H1 (cell line): ENCODE measurements at regions of chr6 and their contacts with region 1.

Region 1: DNA sequence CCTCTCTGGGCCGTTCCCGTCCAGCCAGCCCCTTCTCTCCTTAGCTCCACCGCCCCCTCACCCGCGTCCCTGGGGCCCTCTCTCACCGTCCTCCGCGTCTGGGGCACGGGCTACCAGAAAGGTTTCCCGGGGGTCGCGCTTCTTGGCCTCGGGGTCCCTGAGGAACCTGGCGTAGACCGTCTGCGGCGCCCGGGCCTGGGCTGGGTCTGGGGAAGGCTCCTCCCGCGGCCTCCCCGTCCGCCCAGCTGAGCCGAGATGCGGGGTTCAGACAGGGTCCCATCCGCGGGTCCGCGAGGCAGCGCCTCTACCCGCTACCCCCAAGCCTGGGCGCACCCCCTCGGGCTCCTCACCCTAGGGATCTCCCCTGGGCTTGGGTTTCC is 1.1 kb downstream of the TULP1 start:
- DNase-seq: no peak
- H3K4me3 ChIP-seq: peak overlapping the region; percentile 30 to 67 (median 41)
- H3K27ac ChIP-seq: no peak overlapping the region
- H3K4me1 ChIP-seq: peaks cover 6 to 31% (median 21%) of the 10 kb centered on the region in 4 experiments
- H3K27me3 ChIP-seq: peaks cover 0 to 17% (median 6%) of the 10 kb centered on the region in 4 experiments; a peak in 5 of 7 replicates
- CTCF ChIP-seq: no peak
- EP300 ChIP-seq: no peak
- POLR2A ChIP-seq: no peak
- RAD21 ChIP-seq: no peak

Region 2: DNA sequence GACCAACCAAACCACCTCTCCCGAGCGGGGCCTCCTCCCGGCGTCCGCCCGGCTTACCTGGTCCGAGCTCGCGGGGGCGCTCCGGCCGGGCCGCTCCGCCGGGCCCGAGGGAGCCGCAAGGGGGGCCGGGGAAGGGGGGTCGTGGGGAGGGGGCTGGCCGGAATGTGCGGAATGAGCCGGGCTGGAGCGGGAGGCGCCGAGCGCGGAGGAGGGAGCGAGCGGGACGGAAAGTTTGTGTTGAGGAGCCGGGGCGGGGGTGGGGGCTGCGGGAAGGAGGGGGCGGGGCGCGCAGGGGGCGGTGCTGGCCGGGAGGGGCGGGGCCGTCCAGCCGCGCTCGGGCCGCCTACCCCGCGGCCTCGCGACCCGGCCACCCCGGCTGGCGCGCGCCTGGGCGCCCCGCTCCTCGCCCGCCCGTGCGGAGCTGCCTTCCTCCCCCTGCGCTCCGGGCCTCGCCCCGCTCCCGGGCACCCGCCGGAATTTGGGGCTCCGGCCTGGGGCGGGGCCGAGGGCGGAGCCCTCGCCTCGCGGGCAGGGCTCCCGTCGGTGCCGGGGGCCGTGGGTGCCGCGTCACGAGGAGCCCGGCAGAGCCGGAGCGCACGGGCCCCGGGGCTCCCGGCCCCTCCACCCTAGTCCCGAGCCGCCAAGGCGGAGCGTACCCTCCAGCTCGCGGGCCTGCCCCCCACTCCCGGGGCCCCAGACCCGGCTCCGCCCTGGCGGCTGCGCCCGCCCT is 14.5 kb before region 1 on chr6 and contains the start of gene TEAD3:
- CTCF ChIA-PET with region 1: interaction called, 5 read pairs
- POLR2A ChIA-PET with region 1: interaction called, 1,319 read pairs
- DNase-seq: no peak
- H3K4me3 ChIP-seq: peak within 1 kb of the TSS; percentile 46 to 92 (median 64)
- H3K27ac ChIP-seq: peak within 1 kb of the TSS; percentile 69; the same call in 1 of the 2 replicates
- H3K4me1 ChIP-seq: peaks cover 19 to 44% (median 34%) of the 10 kb centered on the region in 4 experiments
- H3K27me3 ChIP-seq: peaks cover 0 to 13% (median 6%) of the 10 kb centered on the region in 4 experiments; a peak in 4 of 7 replicates
- CTCF ChIP-seq: peak in 1 of 3 experiments; percentile 14; a peak in 1 of 4 replicates
- EP300 ChIP-seq: no peak
- POLR2A ChIP-seq: peak in 1 of 2 experiments; percentile 67; a peak in 2 of 3 replicates
- RAD21 ChIP-seq: peak in 1 of 2 experiments; percentile 7; a peak in 2 of 4 replicates
- total RNA-seq, gene TEAD3: 27.0 and 28.7 TPM in 2 replicates

Region 3: GRCh38 chr6:35757456-35758123 is 246.0 kb after region 1 on chr6:
- CTCF ChIA-PET with region 1: no interaction called
- POLR2A ChIA-PET with region 1: no interaction called
- DNase-seq: no peak
- H3K4me3 ChIP-seq: no peak overlapping the region
- H3K27ac ChIP-seq: no peak overlapping the region
- H3K4me1 ChIP-seq: peaks cover 5 to 18% (median 12%) of the 10 kb centered on the region in 4 experiments
- H3K27me3 ChIP-seq: no peaks in the 10 kb centered on the region
- CTCF ChIP-seq: peak; percentile 64 to 78 (median 71)
- EP300 ChIP-seq: no peak
- POLR2A ChIP-seq: no peak
- RAD21 ChIP-seq: peak; percentile 67 to 83

Region 4: GRCh38 chr6:35850208-35850607 is 338.7 kb after region 1 on chr6:
- CTCF ChIA-PET with region 1: no interaction called
- POLR2A ChIA-PET with region 1: no interaction called
- DNase-seq: no peak
- H3K4me3 ChIP-seq: no peak overlapping the region
- H3K27ac ChIP-seq: no peak overlapping the region
- H3K4me1 ChIP-seq: peaks cover 0 to 3% (median 0%) of the 10 kb centered on the region in 4 experiments; a peak in 1 of 7 replicates
- H3K27me3 ChIP-seq: no peaks in the 10 kb centered on the region
- CTCF ChIP-seq: no peak
- EP300 ChIP-seq: no peak
- POLR2A ChIP-seq: no peak
- RAD21 ChIP-seq: no peak